ENCODE measurements at regions of chr2 and their contacts with region 1.

Region 1: GRCh38 chr2:212249451-212249850 is 289.2 kb downstream of the ERBB4 start:
- DNase-seq: peak; percentile 7
- H3K4me3 Mint-ChIP-seq: no peak overlapping the region
- H3K27ac Mint-ChIP-seq: no peak overlapping the region
- H3K4me1 Mint-ChIP-seq: no peaks in the 10 kb centered on the region
- H3K27me3 Mint-ChIP-seq: no peaks in the 10 kb centered on the region
- CTCF ChIP-seq: no peak

Region 2: GRCh38 chr2:211822686-211823335 is 426.6 kb before region 1 on chr2:
- CTCF ChIA-PET with region 1: no interaction called
- intact Hi-C with region 1: no loop called
- DNase-seq: no peak
- H3K4me3 Mint-ChIP-seq: no peak overlapping the region
- H3K27ac Mint-ChIP-seq: no peak overlapping the region
- H3K4me1 Mint-ChIP-seq: no peaks in the 10 kb centered on the region
- H3K27me3 Mint-ChIP-seq: no peaks in the 10 kb centered on the region
- CTCF ChIP-seq: no peak

Region 3: DNA sequence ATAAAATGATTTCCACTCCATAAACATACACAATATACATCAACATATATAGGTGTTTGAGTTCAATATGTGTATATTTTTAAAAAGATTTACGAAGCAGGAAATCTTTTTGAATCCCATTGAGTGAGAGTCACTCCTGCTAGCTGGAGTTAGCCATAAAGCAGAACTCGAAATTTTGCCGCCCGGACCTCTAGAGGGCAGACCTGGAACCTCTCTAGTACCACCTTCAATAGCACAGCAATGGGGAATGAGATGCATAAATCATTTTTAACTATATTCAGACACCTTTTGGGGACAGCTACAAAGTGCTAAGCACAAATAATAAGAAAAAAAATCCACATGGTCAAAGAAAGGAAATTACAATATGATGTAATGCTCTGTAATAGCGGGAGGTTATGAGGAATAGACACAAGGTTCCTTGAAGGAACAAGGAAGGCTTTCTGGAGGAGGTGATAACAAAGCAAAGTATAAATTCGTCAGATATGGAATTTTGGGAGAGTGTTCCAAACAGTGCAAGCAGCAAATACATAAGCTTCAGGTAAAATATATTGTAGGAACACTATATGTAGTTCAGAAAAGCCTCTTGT is 244.3 kb before region 1 on chr2:
- CTCF ChIA-PET with region 1: interaction called, 4 read pairs
- intact Hi-C with region 1: loop called (anchors 10 kb)
- DNase-seq: peak; percentile 57
- H3K4me3 Mint-ChIP-seq: no peak overlapping the region
- H3K27ac Mint-ChIP-seq: peak overlapping the region; percentile 25
- H3K4me1 Mint-ChIP-seq: no peaks in the 10 kb centered on the region
- H3K27me3 Mint-ChIP-seq: no peaks in the 10 kb centered on the region
- CTCF ChIP-seq: peak; percentile 58

Region 4: DNA sequence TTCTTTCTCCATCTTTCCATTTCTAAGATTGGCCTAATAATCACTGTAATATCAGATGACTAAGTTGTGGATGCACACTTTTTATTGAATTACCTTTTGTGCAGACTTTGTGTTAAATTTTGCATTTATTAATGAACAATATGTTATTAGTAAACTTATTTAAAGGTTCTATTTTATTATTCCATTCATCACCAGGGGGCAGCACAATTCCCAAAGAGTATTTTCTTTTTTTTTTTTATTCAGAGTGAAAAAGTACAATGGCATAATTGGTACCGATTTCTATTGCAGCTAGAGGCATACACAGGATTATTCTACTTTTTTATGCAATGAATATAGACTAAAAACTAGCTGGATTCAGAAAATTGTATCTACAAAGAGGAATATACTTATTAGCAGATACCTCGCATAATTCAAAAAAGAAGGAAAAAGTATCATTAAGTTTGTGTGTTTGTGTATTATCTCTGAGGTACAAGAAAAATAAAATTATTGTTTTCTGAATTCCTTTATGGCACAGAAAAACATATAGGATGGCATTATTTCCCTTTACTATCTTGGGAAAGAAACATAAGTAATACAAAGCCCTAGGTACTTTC is 101.4 kb before region 1 on chr2:
- CTCF ChIA-PET with region 1: interaction called, 7 read pairs
- intact Hi-C with region 1: loop called (anchors 2 kb)
- DNase-seq: peak; percentile 20
- H3K4me3 Mint-ChIP-seq: no peak overlapping the region
- H3K27ac Mint-ChIP-seq: no peak overlapping the region
- H3K4me1 Mint-ChIP-seq: peaks cover 11% of the 10 kb centered on the region
- H3K27me3 Mint-ChIP-seq: no peaks in the 10 kb centered on the region
- CTCF ChIP-seq: peak; percentile 33

Region 5: DNA sequence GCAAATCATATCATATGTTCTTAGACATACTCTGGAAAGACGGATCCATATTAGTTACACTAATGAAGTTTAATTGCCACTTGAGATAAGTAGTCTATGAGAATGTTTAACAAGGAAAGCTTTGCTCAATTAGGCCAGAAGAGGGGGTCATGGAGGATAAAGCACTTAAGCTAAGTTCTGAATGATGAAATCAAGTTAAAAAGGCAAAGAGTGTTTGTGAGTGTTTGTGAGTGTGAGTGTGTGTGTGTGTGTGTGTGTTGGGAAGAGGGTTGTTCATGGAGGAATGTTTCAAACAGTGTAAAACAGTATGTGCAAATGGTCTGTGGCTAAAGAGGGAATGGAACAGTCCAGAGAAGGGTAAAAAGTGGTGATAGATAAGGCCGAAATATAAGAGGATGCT is 71.7 kb before region 1 on chr2:
- CTCF ChIA-PET with region 1: no interaction called
- intact Hi-C with region 1: loop called (anchors 1 kb)
- DNase-seq: no peak
- H3K4me3 Mint-ChIP-seq: no peak overlapping the region
- H3K27ac Mint-ChIP-seq: no peak overlapping the region
- H3K4me1 Mint-ChIP-seq: no peaks in the 10 kb centered on the region
- H3K27me3 Mint-ChIP-seq: no peaks in the 10 kb centered on the region
- CTCF ChIP-seq: peak; percentile 14

Measured in Calu3 (cell line).